Right ventricle myocardium superior (tissue), 1 donor: ENCODE measurements at regions of chr15 and their contacts with region 1.

Region 1: DNA sequence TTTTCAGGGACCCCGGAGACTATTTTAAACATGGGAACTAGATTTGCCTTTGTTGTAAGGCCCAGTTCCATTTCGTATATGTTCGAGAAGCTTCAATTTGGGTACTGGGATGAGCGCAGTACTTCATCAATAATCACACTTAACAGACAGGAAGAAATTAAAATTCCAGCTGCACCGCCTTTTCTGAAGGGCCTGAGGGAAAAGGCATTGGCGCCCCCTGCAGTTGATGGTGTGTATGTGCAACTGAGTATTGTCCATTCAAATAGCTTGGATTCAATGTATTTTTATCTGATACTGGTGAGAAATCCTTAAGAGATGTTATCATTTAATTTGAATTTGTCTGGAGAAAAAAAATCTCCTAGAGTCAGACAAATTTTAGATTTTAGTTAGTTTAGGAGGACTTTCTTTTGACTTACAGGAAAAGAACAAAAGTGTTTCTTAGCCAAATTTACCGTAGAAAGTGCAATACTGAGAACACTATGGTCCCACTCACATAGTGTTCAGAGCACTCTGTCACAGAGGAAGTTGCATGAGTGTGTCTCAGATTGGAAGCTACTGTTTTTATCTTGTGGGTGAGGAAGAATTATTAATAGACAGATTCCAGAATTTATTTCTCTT is 5.4 kb upstream of the ALDH1A2 start:
- DNase-seq: peak; percentile 71
- ATAC-seq: no peak

Region 2: DNA sequence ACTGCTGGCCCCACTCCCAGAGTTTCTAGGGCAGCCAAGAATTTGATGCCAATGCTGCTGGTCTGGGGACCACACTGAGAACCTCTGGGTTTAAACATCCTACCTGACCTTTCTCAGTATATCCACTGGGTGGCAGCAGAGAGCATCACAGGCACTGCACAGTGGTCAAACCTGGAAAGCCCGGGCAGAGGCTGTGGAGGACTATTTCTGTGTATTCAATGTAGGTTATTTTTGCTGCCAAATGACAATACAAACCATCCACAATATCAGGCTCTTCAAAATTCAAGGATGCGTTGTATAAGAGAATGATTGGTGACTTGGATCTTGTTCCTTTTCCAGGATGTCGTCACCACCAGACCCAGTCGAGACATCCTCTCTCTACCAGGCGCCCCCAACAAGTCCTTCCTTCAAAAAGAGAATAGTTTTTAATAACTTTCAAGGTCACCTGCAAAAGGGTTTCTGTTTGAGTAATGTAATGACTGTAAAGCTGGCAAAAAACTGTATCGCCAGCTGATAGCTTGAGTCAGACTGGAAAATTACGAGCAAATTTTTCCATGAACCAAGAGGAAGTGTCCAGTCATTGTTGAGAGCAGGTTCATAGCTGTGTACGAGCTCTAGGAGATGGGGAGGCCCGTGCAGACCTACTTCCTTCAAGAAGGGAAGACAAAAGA is 509.7 kb before region 1 on chr15:
- intact Hi-C with region 1: loop called (anchors 10 kb)
- DNase-seq: peak; percentile 76
- ATAC-seq: peak; percentile 91

Region 3: DNA sequence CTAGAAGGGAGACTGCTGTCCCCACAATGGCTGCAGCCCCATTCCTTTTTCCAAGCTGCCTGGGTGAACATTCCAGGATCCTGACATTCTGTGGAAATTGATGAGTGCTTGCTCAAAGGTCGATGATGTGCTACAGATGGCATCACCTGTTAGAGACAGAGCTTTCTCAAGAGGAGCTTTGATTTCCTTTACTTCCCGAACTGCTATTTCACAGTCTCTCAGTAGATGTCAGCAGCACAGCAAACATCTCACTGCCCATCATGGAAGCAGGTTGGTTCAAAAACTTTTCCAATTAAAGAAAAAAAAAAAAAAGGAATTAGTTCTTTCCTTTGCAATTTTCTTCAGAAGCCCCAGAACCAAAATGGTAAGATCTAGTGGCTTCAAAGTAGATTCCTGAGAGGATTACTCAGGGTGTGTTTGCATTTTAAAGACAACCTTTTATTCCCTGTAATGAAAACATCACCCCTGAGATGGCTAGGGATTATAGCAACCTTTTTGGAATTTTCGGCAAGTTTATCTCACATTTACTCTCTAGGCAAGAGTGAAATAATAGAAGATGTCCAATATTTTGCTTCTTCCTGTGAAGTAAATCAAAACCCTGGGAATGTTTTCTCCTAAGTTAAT is 319.6 kb before region 1 on chr15:
- intact Hi-C with region 1: loop called (anchors 5 kb)
- DNase-seq: no peak
- ATAC-seq: peak; percentile 60

Region 4: DNA sequence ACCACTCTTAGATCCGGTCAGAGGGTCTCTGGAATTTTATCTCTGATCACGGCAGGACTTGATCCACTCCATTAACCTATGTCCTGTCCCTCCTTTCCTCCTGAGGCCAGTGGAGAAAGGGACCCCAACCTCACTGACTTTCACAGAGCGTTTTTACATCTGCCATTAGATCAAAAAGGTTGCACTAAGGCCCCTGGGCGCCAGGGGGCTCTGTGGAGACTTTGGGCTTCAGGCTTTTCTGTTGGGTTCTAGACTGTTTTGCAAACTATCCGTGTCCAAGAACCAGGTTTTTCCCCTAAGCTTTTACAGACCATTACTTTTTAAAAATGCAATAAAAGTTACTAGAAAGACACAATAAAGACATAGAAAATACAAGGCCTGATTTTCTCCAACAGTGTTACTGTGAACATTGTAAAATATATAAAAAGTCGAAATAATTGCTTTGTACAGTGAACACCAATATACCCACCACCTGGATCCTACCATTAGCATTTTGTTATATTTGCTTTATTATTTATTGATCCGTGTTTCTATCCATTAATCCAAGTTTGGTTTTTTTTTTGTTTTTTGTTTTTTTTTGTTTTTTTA is 204.7 kb before region 1 on chr15:
- intact Hi-C with region 1: loop called (anchors 5 kb)
- DNase-seq: peak; percentile 77
- ATAC-seq: peak; percentile 78